HCT116 (cell line): ENCODE measurements at regions of chr10 and their contacts with region 1.

Region 1: DNA sequence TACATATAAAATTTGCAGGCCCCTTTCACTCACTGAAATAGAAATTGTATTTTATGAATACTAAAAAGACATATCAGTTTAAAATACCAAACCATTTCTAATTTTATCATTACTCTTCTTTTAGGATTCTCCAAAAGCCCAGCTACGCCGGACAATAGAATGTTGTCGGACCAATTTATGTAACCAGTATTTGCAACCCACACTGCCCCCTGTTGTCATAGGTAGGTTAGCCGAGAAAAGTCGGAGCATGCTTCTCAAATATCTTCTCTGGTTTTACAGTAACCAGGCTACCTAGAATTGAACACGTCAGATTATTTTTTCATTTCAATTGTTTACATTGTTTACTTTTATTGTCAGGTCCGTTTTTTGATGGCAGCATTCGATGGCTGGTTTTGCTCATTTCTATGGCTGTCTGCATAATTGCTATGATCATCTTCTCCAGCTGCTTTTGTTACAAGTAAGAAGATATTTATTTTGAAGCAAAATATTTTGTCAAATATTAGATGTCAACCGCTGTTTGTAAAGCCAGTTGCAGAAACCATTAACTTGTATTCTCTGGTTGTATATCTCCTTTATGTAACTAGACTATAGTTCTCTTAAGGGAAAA is 57.6 kb downstream of the MMRN2 start:
- DNase-seq: peak; percentile 39
- ATAC-seq: peak; percentile 81
- H3K4me3 ChIP-seq: no peak overlapping the region
- H3K27ac ChIP-seq: no peak overlapping the region
- H3K4me1 ChIP-seq: no peaks in the 10 kb centered on the region
- H3K27me3 ChIP-seq: no peaks in the 10 kb centered on the region
- CTCF ChIP-seq: peak; percentile 66 to 85 (median 71)
- POLR2A ChIP-seq: no peak
- RAD21 ChIP-seq: peak; percentile 79

Region 2: DNA sequence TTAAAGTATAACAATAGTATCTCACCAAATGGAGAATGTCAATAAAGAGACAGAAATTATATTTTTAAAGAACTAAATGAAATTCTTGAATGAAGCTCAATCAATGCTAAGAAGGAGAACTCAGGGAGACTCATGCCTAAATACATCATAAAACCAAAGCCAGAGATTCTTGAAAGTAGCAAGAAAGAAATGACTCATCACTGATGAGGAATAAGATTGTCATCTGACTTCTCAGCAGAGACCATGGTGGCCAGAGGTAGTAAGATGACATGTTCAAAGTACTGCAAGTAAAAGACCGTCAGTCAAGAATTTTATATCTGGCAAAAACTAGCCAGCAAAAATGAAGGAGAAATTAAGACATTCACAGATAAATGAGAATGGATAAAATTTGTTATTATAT is 932.2 kb before region 1 on chr10:
- CTCF ChIA-PET with region 1: no interaction called
- POLR2A ChIA-PET with region 1: no interaction called
- RAD21 ChIA-PET with region 1: no interaction called
- intact Hi-C with region 1: no loop called
- DNase-seq: peak; percentile 29
- ATAC-seq: peak; percentile 42; the same call in 1 of the 2 replicates
- H3K4me3 ChIP-seq: no peak overlapping the region
- H3K27ac ChIP-seq: no peak overlapping the region
- H3K4me1 ChIP-seq: peaks cover 0 to 8% of the 10 kb centered on the region in 2 experiments; a peak in 1 of 4 replicates
- H3K27me3 ChIP-seq: 0 out of 2 replicates have a peak, but pooled peaks cover 9% of the 10 kb centered on the region
- CTCF ChIP-seq: no peak
- POLR2A ChIP-seq: no peak
- RAD21 ChIP-seq: no peak

Region 3: GRCh38 chr10:86599729-86600128 is 300.0 kb before region 1 on chr10:
- CTCF ChIA-PET with region 1: no interaction called
- POLR2A ChIA-PET with region 1: no interaction called
- RAD21 ChIA-PET with region 1: no interaction called
- intact Hi-C with region 1: loop called (anchors 10 kb)
- DNase-seq: no peak
- ATAC-seq: peak; percentile 97
- H3K4me3 ChIP-seq: no peak overlapping the region
- H3K27ac ChIP-seq: no peak overlapping the region
- H3K4me1 ChIP-seq: peaks cover 0 to 12% of the 10 kb centered on the region in 2 experiments; a peak in 1 of 4 replicates
- H3K27me3 ChIP-seq: no peaks in the 10 kb centered on the region
- CTCF ChIP-seq: no peak
- POLR2A ChIP-seq: peak; percentile 49
- RAD21 ChIP-seq: no peak

Region 4: GRCh38 chr10:86710987-86711512 is 188.7 kb before region 1 on chr10:
- CTCF ChIA-PET with region 1: no interaction called
- POLR2A ChIA-PET with region 1: no interaction called
- RAD21 ChIA-PET with region 1: no interaction called
- intact Hi-C with region 1: loop called (anchors 5 kb)
- DNase-seq: peak; percentile 54
- ATAC-seq: peak; percentile 90
- H3K4me3 ChIP-seq: peak overlapping the region; percentile 63 to 87
- H3K27ac ChIP-seq: peak overlapping the region; percentile 98
- H3K4me1 ChIP-seq: peaks cover 8 to 19% of the 10 kb centered on the region in 2 experiments; a peak in 3 of 4 replicates
- H3K27me3 ChIP-seq: no peaks in the 10 kb centered on the region
- CTCF ChIP-seq: peak; percentile 63 to 77 (median 67)
- POLR2A ChIP-seq: no peak
- RAD21 ChIP-seq: peak; percentile 73